ENCODE measurements at regions of chr3 and their contacts with region 1.

Region 1: DNA sequence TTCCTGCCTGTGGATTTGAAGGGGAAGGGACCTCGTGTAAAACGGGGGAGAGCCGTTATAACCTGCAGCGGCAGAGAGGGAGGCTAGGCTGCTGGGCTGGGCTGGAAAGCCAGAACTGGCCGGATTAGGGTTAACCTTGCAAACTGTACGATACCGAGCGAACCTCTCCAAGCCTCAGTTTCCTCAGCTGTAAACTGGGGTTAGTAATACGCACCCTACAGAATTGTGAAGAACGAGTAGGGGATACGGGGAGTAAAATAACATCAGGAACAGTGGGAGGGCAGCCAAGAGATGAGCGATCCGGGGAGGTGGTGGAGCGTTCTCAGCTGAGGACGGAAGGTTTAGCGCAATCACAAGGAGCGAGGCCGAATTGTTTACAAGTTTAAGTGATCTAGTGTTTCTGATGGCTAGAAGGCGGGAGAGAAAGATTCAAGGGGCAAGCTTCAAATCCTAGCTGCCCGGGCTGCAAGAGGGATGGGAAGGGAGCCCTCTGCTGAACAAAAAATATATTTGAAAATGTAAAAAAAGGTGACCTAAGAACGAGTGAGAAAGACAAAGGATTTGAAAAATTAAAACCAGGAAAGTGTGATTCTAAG is 768 bp upstream of the SEMA5B start:
- DNase-seq: peak; percentile 29
- ATAC-seq: peak; percentile 11
- H3K4me3 Mint-ChIP-seq: peak overlapping the region; percentile 89
- H3K27ac Mint-ChIP-seq: no peak overlapping the region
- H3K4me1 Mint-ChIP-seq: peaks cover 33% of the 10 kb centered on the region
- H3K27me3 Mint-ChIP-seq: peaks cover 49% of the 10 kb centered on the region
- CTCF ChIP-seq: no peak

Region 2: GRCh38 chr3:122942937-122943827 is 85.1 kb before region 1 on chr3:
- CTCF ChIA-PET with region 1: interaction called, 72 read pairs
- POLR2A ChIA-PET with region 1: no interaction called
- DNase-seq: peak; percentile 91
- ATAC-seq: peak; percentile 94
- H3K4me3 Mint-ChIP-seq: no peak overlapping the region
- H3K27ac Mint-ChIP-seq: no peak overlapping the region
- H3K4me1 Mint-ChIP-seq: peaks cover 12% of the 10 kb centered on the region
- H3K27me3 Mint-ChIP-seq: peaks cover 7% of the 10 kb centered on the region
- CTCF ChIP-seq: peak; percentile 90

Region 3: GRCh38 chr3:122977746-122978466 is 50.4 kb before region 1 on chr3:
- CTCF ChIA-PET with region 1: interaction called, 11 read pairs
- POLR2A ChIA-PET with region 1: no interaction called
- DNase-seq: peak; percentile 39
- ATAC-seq: peak; percentile 54
- H3K4me3 Mint-ChIP-seq: no peak overlapping the region
- H3K27ac Mint-ChIP-seq: no peak overlapping the region
- H3K4me1 Mint-ChIP-seq: peaks cover 71% of the 10 kb centered on the region
- H3K27me3 Mint-ChIP-seq: no peaks in the 10 kb centered on the region; the same call in 1 of the 2 replicates
- CTCF ChIP-seq: no peak

Region 4: DNA sequence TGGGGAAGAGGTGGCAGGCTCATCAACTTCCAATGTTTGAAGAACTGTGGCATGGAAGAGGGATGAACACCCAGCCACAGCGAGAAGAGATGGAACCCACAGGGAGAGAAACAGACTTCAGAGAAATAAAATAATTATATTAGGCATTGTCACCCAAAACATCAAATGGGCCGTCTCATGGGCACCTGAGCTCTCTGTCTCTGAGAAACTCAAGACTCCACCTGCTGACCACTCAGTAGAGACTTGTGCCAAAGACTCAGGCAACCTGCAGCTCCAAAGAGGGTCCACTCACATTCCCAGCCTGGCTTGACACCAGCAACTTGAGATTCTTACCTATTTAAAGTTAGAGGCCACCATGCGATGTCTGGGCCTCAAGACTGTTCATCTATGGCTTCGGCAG is 12.8 kb before region 1 on chr3:
- CTCF ChIA-PET with region 1: interaction called, 14 read pairs
- POLR2A ChIA-PET with region 1: interaction called, 7 read pairs
- DNase-seq: no peak
- ATAC-seq: peak; percentile 70
- H3K4me3 Mint-ChIP-seq: no peak overlapping the region
- H3K27ac Mint-ChIP-seq: no peak overlapping the region
- H3K4me1 Mint-ChIP-seq: peaks cover 12% of the 10 kb centered on the region
- H3K27me3 Mint-ChIP-seq: no peaks in the 10 kb centered on the region
- CTCF ChIP-seq: no peak

Region 5: DNA sequence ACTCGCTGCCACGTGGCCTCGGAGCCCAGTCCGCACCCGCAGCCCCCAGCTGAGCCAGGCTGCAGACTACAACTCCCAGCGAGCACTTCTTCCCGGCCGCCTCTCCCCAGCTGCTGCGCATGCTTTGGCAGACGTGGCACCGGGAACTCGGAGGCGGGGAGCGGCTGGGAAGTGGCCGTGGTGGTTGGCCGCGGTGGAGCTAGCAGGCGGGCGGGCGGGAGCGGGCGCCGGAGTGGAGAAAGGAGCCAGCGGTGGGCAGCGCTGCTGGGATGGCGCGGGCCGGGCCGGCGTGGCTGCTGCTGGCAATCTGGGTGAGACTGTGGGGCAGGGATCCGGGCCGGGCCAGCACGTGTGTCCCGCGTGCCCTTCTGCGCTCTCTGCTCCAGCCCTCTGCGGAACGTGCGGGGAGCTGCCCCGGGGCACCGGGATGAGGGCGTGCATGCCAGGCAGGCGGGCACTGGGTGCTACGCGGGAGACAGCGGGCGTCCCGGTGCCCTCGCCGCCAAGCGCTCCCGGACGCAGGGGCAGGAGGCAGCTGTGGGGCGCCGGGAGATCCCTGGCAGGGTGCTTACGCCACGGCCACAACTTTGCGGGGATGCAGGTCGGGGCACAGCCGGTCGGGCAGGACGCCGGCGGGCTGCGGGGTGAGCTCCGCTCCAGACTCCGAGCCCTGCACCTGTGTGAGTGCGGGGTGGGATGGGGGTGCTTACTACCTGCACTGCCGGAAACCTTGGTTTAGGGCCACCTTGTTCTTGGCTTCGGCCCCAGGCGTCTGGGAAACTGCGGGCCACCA is 38.8 kb after region 1 on chr3 and contains the start of gene PDIA5:
- CTCF ChIA-PET with region 1: interaction called, 16 read pairs
- POLR2A ChIA-PET with region 1: no interaction called
- DNase-seq: peak; percentile 94
- ATAC-seq: peak; percentile 85
- H3K4me3 Mint-ChIP-seq: peak within 1 kb of the TSS; percentile 88
- H3K27ac Mint-ChIP-seq: peak within 1 kb of the TSS; percentile 61; the same call in 1 of the 2 replicates
- H3K4me1 Mint-ChIP-seq: peaks cover 40% of the 10 kb centered on the region
- H3K27me3 Mint-ChIP-seq: peaks cover 33% of the 10 kb centered on the region
- CTCF ChIP-seq: no peak
- total RNA-seq, gene PDIA5: 30.5 to 41.5 TPM (median 34.6 TPM) in 3 replicates

Region 6: DNA sequence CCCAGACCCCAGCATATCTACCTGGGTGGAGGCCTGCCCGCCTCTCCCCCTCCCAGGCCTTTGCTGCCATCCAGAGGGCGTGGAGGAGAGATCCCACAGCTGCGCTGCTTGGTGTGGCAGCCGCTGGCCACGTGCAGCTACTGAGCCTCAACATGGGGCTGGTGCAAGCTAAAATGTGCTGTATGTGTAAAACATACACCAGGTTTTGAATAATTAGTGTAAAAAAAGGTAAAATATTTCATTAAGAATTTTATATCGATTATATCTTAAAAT is 269.2 kb after region 1 on chr3:
- CTCF ChIA-PET with region 1: no interaction called
- POLR2A ChIA-PET with region 1: no interaction called
- DNase-seq: peak; percentile 36
- ATAC-seq: peak; percentile 66
- H3K4me3 Mint-ChIP-seq: no peak overlapping the region
- H3K27ac Mint-ChIP-seq: no peak overlapping the region
- H3K4me1 Mint-ChIP-seq: no peaks in the 10 kb centered on the region
- H3K27me3 Mint-ChIP-seq: no peaks in the 10 kb centered on the region
- CTCF ChIP-seq: no peak

Region 7: DNA sequence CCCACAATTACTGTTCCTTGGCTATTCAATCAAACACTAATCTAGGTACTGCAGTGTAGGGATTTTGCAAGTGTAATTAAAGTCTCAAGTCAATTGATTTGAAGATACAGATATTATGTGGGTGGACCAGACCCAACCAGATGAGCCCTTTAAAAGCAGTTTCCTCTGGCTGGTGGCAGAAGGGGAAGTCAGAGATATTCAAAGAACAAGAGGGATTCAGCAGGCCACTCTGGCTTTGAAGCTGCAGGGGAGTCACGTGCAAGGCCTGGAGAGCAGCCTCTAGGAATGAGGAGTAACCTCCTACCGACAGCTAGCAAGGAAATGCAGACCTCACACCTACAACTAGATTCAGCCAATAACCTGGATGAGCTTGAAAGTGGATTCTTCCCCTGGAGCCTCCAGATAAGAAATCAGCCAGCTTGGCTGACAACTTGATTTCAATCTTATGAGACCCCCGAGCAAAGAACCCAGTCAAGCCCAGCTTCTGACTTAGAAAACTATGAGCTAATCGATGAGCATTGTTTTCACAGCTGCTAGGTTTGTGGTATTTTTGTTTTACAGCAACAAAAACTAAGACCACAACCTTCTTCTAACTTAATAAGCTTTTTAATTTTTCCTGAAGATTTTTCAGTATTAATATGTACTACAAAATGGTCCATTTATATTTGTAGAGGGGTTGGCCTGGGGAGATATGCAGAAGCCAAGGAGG is 543.1 kb after region 1 on chr3:
- CTCF ChIA-PET with region 1: no interaction called
- POLR2A ChIA-PET with region 1: no interaction called
- DNase-seq: peak; percentile 46
- ATAC-seq: peak; percentile 98
- H3K4me3 Mint-ChIP-seq: no peak overlapping the region
- H3K27ac Mint-ChIP-seq: peak overlapping the region; percentile 48; the same call in 1 of the 2 replicates
- H3K4me1 Mint-ChIP-seq: peaks cover 19% of the 10 kb centered on the region
- H3K27me3 Mint-ChIP-seq: no peaks in the 10 kb centered on the region
- CTCF ChIP-seq: no peak

Measured in WTC11 (cell line).